Calu3 (cell line): ENCODE measurements at regions of chr11 and their contacts with region 1.

Region 1: DNA sequence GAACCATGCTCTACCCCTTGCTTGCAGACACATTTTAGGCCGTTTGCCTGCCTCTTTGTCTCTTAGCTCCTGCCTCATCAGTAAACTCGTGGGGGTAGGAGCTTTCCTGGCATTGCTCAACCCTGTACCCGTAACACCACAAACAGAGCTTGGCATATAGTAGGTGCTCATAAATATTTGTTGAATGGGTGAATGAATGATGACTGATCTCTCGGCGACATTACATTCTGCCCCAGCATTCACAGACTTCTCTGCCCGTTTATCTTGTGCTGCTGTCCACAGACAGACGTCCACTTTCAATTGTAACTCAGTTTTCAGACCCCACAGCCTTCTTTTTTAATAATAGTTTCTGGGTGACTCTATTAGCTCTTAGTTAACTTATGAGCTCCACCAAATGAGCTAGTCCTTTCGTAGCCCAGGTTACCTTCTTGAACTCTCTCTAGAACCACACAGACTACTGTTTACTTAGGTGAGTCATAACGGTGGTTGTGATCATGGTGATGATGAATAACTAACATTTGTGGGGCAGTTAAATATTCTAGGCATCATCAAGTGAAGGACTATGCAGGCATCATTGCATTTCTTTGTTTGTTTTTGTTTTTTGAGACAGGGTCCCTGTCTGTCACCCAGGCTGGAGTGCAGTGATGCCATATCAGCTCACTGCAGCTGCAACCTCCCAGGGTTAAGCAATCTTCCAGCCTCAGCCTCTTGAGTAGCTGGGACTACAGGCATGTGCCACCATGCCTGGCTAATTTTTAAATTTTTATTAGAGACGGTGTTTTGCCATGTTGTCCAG is 188.5 kb downstream of the ADAMTS15 start:
- DNase-seq: peak; percentile 13
- H3K4me3 Mint-ChIP-seq: peak overlapping the region; percentile 9
- H3K27ac Mint-ChIP-seq: peak overlapping the region; percentile 55
- H3K4me1 Mint-ChIP-seq: peaks cover 19% of the 10 kb centered on the region
- H3K27me3 Mint-ChIP-seq: no peaks in the 10 kb centered on the region
- CTCF ChIP-seq: no peak

Region 2: GRCh38 chr11:130817330-130817944 is 180.5 kb after region 1 on chr11:
- CTCF ChIA-PET with region 1: no interaction called
- intact Hi-C with region 1: loop called (anchors 10 kb)
- DNase-seq: no peak
- H3K4me3 Mint-ChIP-seq: no peak overlapping the region
- H3K27ac Mint-ChIP-seq: no peak overlapping the region
- H3K4me1 Mint-ChIP-seq: peaks cover 29% of the 10 kb centered on the region
- H3K27me3 Mint-ChIP-seq: peaks cover 3% of the 10 kb centered on the region
- CTCF ChIP-seq: no peak